ENCODE measurements at regions of chr7 and their contacts with region 1.

Region 1: DNA sequence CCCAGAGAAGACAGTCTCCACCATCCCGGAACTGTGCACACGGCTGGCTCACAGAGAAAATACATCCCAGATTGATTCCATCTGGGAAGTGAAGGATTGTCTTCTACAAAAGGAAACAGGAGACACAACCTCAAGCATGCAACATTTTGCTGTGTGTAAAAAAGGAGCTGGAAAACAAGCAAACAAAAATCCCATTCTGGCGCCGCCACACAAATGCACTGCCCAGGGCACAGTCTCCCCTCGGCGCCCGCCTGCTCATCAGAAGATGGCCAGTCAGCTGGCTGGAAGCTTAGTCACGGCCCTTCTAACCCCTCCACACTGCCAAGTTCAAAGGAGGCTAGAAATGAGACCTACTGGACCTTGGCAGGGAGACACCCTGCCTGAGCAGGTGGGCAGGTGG is 14.1 kb upstream of the CYTH3 start:
- DNase-seq: no peak
- H3K4me3 ChIP-seq: no peak overlapping the region
- H3K27me3 ChIP-seq: no peaks in the 10 kb centered on the region
- CTCF ChIP-seq: no peak

Region 2: GRCh38 chr7:5574770-5575269 is 711.7 kb before region 1 on chr7:
- CTCF ChIA-PET with region 1: no interaction called
- POLR2A ChIA-PET with region 1: interaction called, 16 read pairs
- DNase-seq: no peak
- H3K4me3 ChIP-seq: no peak overlapping the region
- H3K27me3 ChIP-seq: peaks cover 2% of the 10 kb centered on the region; the same call in 1 of the 2 replicates
- CTCF ChIP-seq: no peak